SK-N-SH (cell line): ENCODE measurements at regions of chr1 and their contacts with region 1.

Region 1: DNA sequence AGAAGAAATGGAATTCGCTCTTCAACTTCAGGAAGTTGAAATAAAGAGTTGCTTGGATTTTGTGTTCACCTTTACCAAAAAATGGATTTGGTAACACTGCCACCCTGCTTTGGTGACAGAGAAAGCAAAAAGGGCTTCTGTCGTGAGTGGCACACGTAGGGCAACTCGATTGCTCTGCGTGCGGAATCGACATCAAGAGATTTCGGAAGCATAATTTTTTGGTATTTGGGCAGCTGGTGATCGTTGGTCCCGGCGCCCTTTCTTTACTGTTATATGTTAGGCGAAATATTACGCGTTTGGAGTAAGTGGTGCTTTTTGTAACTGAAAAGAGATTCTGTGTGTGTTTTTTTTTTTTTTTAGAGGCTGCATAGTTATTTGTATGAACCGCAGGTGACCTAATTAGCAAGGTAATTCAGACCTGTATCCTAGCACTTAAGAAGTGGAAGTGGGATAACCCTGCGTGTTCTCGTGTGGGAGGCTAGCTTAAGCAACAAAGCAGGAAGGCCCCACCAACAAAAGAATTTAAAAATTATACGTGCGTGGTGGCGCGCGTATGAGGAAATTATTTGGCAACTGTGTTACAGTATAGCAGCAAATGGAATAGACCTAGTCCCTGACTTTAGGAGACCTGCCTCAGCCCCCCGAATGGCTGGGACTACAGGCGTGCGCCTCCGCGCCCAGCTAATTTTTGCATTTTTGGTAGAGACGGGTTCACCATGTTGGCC is at the start of gene RNU11:
- DNase-seq: peak; percentile 73
- H3K4me3 ChIP-seq: peak within 1 kb of the TSS; percentile 39 to 40
- H3K27ac ChIP-seq: peak within 1 kb of the TSS; percentile 96 to 99
- H3K4me1 ChIP-seq: peaks cover 0 to 9% of the 10 kb centered on the region in 2 experiments; a peak in 2 of 4 replicates
- H3K27me3 ChIP-seq: no peaks in the 10 kb centered on the region
- CTCF ChIP-seq: no peak
- EP300 ChIP-seq: peak; percentile 15 to 80; a peak in 1 of 4 replicates
- RAD21 ChIP-seq: no peak; the same call in 1 of the 2 replicates
- polyA plus RNA-seq, gene RNU11: not detected in 2 replicates

Region 2: DNA sequence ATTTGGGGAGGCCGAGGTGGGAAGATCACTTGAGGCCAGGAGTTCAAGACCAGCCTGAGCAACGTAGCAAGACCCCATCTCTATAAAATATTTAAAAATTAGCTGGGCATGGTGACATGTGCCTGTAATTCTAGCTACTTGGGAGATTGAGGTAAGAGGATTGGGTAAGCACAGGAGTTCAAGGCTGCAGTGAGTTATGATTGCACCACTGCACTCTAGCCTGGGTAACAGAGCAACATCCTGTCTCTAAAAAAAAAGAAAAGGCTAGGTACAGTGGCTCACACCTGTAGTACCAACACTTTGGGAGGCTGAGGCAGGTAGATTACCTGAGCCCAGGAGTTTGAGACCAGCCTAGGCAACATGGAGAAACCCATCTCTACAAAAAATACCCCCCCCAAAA is 178.5 kb before region 1 on chr1:
- CTCF ChIA-PET with region 1: no interaction called
- POLR2A ChIA-PET with region 1: no interaction called
- DNase-seq: no peak
- H3K4me3 ChIP-seq: no peak overlapping the region
- H3K27ac ChIP-seq: no peak overlapping the region
- H3K4me1 ChIP-seq: no peaks in the 10 kb centered on the region
- H3K27me3 ChIP-seq: no peaks in the 10 kb centered on the region
- CTCF ChIP-seq: no peak
- EP300 ChIP-seq: no peak
- RAD21 ChIP-seq: no peak

Region 3: GRCh38 chr1:28668191-28668955 is 19.7 kb after region 1 on chr1 and contains the start of gene GMEB1:
- CTCF ChIA-PET with region 1: interaction called, 3 read pairs
- POLR2A ChIA-PET with region 1: interaction called, 32 read pairs
- DNase-seq: peak; percentile 99
- H3K4me3 ChIP-seq: peak within 1 kb of the TSS; percentile 67 to 83
- H3K27ac ChIP-seq: peak within 1 kb of the TSS; percentile 92 to 94
- H3K4me1 ChIP-seq: peaks cover 5% of the 10 kb centered on the region in 2 experiments; a peak in 1 of 4 replicates
- H3K27me3 ChIP-seq: no peaks in the 10 kb centered on the region
- CTCF ChIP-seq: no peak
- EP300 ChIP-seq: no peak
- RAD21 ChIP-seq: no peak
- polyA plus RNA-seq, gene GMEB1: 3.6 TPM in 2 replicates

Region 4: GRCh38 chr1:28745653-28746173 is 97.1 kb after region 1 on chr1:
- CTCF ChIA-PET with region 1: no interaction called
- POLR2A ChIA-PET with region 1: no interaction called
- DNase-seq: no peak
- H3K4me3 ChIP-seq: no peak overlapping the region
- H3K27ac ChIP-seq: no peak overlapping the region
- H3K4me1 ChIP-seq: peaks cover 3 to 15% of the 10 kb centered on the region in 2 experiments; a peak in 2 of 4 replicates
- H3K27me3 ChIP-seq: no peaks in the 10 kb centered on the region
- CTCF ChIP-seq: no peak
- EP300 ChIP-seq: no peak
- RAD21 ChIP-seq: no peak